HEK293 (cell line): ENCODE measurements at regions of chr2 and their contacts with region 1.

Region 1: GRCh38 chr2:161223139-161223732 is 63.0 kb downstream of the TANK start:
- H3K4me3 ChIP-seq: no peak overlapping the region
- H3K27ac ChIP-seq: no peak overlapping the region
- H3K4me1 ChIP-seq: no peaks in the 10 kb centered on the region
- CTCF ChIP-seq: no peak

Region 2: DNA sequence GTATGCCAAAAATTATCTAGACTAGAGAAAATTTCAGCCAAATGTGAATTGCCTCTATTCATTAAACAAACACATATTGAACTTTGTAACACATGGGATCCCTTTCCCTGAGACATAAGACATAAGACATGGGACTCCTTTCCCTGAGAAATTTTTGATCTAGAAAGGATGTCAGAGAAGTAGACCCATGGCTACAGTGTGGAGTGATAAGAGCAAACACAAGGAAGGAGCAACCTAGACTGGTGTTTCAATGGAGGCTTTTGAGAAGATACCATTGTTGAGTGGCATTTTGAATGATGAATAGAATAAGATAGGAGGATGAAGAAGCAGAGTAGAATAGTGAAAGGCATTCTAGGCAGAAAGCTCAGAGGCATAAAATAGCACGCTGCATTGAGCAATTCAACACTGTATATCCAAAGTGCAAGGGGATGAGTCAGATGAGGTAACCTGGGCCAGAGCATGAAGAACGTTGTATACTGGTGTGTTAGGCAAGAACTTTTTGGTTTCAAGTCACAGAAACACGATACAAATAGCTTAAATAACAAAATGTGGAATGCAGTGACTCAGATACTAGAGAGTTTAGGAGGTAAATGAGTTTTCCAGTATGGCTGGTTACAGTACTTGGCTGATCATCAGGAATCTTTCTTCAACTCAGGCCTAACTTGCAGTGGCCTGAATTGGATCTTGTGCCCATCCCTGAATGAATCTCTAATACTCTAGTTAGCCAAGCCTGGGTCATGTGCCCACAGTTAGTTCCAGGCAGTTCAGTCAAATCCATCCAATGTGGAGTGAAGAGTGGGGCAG is 192.8 kb before region 1 on chr2:
- CTCF ChIA-PET with region 1: no interaction called
- POLR2A ChIA-PET with region 1: no interaction called
- H3K4me3 ChIP-seq: no peak overlapping the region
- H3K27ac ChIP-seq: no peak overlapping the region
- H3K4me1 ChIP-seq: no peaks in the 10 kb centered on the region
- CTCF ChIP-seq: no peak

Region 3: DNA sequence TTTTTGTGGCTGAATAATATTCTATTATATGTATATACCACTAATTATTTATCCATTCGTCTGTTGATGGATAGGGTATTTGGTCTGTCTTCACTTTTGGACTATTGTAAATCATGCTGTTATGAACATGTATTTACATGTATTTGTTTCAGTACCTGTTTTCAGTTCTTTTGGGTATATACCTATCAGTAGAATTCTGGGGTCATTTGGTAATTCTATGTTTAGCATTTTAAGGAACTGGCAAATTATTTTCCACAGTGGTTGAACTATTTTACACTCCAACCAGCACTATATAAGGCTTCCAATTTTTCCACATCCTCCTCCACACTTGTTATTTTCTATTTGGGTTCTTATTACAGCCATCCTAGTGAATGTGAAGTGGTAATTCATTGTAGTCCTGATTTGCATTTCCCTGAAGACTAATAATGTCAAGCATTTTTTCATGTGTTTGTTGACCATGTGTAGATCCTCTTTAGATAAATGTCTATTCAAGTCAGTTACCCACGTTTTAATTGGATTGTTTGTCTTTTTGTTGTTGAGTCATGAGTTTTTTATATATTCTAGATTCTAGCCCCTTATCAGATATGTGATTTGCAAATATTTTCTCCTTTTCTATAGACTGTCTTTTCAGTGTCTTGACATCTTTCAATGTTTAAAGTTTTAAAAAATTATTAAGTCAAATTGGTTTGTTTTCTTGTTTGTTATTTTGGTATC is 75.2 kb before region 1 on chr2:
- CTCF ChIA-PET with region 1: no interaction called
- POLR2A ChIA-PET with region 1: no interaction called
- H3K4me3 ChIP-seq: no peak overlapping the region
- H3K27ac ChIP-seq: no peak overlapping the region
- H3K4me1 ChIP-seq: no peaks in the 10 kb centered on the region
- CTCF ChIP-seq: no peak

Region 4: GRCh38 chr2:161238560-161239325 is 15.5 kb after region 1 on chr2:
- CTCF ChIA-PET with region 1: interaction called, 26 read pairs
- POLR2A ChIA-PET with region 1: no interaction called
- H3K4me3 ChIP-seq: peak overlapping the region; percentile 42
- H3K27ac ChIP-seq: no peak overlapping the region; the same call in 1 of the 2 replicates
- H3K4me1 ChIP-seq: no peaks in the 10 kb centered on the region
- CTCF ChIP-seq: peak; percentile 13; the same call in 1 of the 2 replicates

Region 5: DNA sequence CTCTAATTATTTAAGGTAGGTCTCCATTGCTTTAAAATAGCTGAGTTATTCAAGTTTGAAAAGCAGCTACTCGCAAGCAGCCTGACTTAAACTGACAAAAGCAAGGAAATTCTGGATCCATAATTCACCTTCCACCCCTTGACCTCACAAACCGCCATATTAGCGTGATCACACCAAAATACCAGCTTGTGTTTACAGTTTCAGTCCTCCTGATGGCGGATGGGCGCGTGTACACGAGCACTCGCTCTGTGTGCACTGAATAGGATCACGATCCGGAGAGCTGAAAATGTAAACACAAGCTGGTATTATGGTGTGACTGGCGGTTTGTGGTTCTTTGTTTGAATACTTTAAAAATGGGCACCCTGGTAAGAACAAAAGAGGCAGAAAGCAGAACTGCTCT is 42.6 kb after region 1 on chr2:
- CTCF ChIA-PET with region 1: interaction called, 14 read pairs
- POLR2A ChIA-PET with region 1: no interaction called
- H3K4me3 ChIP-seq: no peak overlapping the region
- H3K27ac ChIP-seq: no peak overlapping the region
- H3K4me1 ChIP-seq: no peaks in the 10 kb centered on the region
- CTCF ChIP-seq: no peak

Region 6: DNA sequence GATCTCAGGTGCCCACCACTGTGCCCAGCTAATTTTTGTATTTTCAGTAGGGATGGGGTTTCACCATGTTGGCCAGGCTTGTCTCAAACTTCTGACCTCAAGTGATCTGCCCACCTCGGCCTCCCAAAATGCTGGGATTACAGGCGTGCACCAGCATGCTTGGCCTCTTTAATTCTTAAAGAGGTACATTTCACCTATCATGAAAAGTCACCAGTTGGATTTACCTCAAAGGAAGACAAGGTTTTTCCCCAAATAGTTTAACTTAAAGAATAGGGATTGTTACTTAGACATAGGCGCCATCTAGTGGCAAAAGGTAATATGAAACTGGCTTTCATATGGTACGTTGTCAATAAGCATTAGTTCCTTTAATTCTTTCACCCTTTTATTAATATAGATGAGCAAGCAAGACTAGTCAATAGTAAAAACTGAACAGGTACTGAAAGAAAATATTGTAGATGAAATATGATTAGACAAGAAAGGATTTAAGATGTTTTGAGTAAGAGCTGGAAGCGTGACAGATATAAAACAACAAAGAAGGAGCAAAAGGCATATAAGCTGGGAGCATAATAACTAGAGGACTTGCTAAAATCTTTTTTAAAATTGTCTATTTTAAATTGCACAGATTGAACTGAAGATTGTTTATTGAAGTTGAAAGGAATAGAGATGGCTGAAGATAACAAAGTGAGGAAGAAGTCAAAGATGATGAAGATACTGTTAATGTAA is 50.0 kb after region 1 on chr2:
- CTCF ChIA-PET with region 1: interaction called, 25 read pairs
- POLR2A ChIA-PET with region 1: no interaction called
- H3K4me3 ChIP-seq: no peak overlapping the region
- H3K27ac ChIP-seq: no peak overlapping the region
- H3K4me1 ChIP-seq: no peaks in the 10 kb centered on the region
- CTCF ChIP-seq: peak; percentile 53